Cardiac septum (tissue), 1 donor: ENCODE measurements at regions of chr14 and their contacts with region 1.

Region 1: DNA sequence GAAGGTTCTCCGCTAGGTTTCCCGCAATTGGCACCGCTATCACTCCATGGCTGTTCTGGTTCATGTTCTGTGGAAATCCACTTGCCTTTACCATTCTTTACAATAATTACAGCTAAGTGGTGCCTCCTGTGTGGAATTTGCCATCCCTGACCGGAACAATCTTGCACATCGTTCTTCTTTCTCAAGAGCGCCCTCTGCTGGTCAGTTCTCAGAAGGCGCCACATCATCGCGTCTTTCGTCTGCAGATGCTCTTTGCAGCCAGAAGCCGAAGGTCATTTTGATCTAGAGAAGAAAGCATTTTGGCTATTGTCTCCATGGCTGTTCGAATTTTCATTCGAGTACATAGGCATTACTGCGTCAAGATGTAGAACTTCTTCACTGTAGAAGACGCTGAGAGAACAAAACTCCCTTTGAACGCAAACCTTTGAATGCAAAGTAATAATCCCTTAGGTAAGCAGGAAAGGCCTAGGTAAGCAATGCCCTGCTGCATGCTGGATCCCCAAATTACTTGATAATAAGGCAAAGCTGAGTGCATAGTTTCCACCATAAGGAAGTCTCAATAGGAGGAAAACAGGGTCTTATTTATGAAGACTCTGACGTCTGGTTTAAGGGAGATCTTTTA is 10.1 kb upstream of the RTRAF start:
- DNase-seq: peak; percentile 90

Region 2: DNA sequence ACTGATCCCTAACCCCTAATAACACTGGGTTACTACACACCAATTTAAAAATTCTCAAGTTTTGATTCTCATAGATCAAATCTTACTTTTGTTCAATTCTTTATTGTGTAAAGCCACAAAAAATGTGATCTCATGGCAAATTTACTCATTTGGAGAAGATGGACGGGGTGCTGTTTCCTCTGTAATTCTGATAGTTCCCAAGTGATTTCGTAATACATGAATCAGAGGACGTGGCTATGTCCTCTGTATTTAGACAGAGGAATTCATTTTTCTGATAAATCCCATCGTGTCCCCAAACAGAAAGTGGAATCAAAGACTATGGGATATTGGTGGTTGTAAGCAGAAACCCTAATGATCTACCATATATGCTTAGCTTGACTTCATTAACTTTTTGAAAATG is 195.4 kb before region 1 on chr14:
- intact Hi-C with region 1: loop called (anchors 2 kb)
- DNase-seq: no peak

Region 3: DNA sequence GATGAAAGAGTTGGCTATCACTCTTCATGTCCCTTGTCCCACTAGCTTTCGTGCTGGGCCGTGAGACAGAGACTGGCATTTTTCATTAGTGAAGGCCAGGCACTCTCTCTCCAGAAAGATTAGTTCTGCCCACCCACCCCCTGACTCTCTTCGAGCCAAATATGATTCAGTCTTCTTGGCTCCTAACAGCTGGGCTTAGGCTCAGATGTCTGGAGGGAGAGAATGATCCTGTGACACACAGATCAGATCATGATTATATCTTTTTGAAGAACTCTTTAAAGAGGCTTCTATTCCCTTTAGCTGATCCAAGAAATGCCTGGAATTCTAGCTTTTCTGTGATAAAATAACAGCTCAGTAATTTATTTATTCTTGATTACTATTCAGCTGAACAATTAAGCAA is 124.0 kb before region 1 on chr14:
- intact Hi-C with region 1: loop called (anchors 10 kb)
- DNase-seq: no peak